CD14-positive monocyte (primary cell): ENCODE measurements at regions of chr3 and their contacts with region 1.

Region 1: DNA sequence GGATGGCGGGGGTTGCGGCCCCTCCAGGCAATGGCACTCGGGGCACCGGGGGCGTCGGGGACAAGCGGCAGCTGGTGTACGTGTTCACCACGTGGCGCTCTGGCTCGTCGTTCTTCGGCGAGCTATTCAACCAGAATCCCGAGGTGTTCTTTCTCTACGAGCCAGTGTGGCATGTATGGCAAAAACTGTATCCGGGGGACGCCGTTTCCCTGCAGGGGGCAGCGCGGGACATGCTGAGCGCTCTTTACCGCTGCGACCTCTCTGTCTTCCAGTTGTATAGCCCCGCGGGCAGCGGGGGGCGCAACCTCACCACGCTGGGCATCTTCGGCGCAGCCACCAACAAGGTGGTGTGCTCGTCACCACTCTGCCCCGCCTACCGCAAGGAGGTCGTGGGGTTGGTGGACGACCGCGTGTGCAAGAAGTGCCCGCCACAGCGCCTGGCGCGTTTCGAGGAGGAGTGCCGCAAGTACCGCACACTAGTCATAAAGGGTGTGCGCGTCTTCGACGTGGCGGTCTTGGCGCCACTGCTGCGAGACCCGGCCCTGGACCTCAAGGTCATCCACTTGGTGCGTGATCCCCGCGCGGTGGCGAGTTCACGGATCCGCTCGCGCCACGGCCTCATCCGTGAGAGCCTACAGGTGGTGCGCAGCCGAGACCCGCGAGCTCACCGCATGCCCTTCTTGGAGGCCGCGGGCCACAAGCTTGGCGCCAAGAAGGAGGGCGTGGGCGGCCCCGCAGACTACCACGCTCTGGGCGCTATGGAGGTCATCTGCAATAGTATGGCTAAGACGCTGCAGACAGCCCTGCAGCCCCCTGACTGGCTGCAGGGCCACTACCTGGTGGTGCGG is 1.9 kb downstream of the CHST2 start:
- DNase-seq: peak in 2 of 3 donors; percentile 35 to 57
- H3K4me3 ChIP-seq: peak overlapping the region; percentile 70 to 98 (median 94)
- H3K4me3 Mint-ChIP-seq: peak overlapping the region; percentile 78 to 84
- H3K27ac ChIP-seq: peak overlapping the region in 1 of 2 donors; percentile 13
- H3K27ac Mint-ChIP-seq: peak overlapping the region in 5 of 7 donors; percentile 35 to 78 (median 68)
- H3K4me1 ChIP-seq: peaks cover 44 to 65% of the 10 kb centered on the region in 2 donors
- H3K4me1 Mint-ChIP-seq: peaks cover 55% of the 10 kb centered on the region
- H3K27me3 ChIP-seq: peaks cover 0 to 5% of the 10 kb centered on the region in 2 donors
- H3K27me3 Mint-ChIP-seq: peaks cover 13 to 16% (median 14%) of the 10 kb centered on the region in 3 donors
- CTCF ChIP-seq: peak; percentile 71

Region 2: DNA sequence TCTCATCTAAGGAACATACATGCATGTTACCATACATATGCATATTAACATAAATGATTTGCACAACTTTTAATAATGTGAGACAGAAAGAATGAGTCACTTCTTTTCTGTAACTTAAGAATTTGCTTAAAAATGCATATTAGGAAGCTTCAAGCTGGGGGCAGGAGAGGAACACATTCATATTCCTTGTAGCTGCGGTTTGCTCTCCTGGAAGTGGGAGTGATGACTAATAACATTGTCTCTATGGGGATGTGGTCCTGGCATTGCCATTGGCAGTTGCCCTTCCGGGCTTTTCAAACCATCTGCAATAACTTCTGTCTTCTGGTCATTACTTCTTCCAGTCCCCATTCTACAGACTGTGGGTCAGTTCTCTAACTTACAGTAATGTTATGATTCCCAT is 13.7 kb after region 1 on chr3:
- intact Hi-C with region 1: loop called in 1 of 2 experiments (anchors 1 kb)
- DNase-seq: peak; percentile 85 to 97 (median 97)
- H3K4me3 ChIP-seq: peak overlapping the region in 1 of 3 experiments; percentile 17
- H3K4me3 Mint-ChIP-seq: peak overlapping the region in 1 of 2 donors; percentile 43
- H3K27ac ChIP-seq: peak overlapping the region in 1 of 2 donors; percentile 63
- H3K27ac Mint-ChIP-seq: peak overlapping the region; percentile 73 to 93 (median 83)
- H3K4me1 ChIP-seq: peaks cover 24 to 32% of the 10 kb centered on the region in 2 donors
- H3K4me1 Mint-ChIP-seq: peaks cover 35% of the 10 kb centered on the region
- H3K27me3 ChIP-seq: no peaks in the 10 kb centered on the region
- H3K27me3 Mint-ChIP-seq: no peaks in the 10 kb centered on the region
- CTCF ChIP-seq: no peak

Region 3: DNA sequence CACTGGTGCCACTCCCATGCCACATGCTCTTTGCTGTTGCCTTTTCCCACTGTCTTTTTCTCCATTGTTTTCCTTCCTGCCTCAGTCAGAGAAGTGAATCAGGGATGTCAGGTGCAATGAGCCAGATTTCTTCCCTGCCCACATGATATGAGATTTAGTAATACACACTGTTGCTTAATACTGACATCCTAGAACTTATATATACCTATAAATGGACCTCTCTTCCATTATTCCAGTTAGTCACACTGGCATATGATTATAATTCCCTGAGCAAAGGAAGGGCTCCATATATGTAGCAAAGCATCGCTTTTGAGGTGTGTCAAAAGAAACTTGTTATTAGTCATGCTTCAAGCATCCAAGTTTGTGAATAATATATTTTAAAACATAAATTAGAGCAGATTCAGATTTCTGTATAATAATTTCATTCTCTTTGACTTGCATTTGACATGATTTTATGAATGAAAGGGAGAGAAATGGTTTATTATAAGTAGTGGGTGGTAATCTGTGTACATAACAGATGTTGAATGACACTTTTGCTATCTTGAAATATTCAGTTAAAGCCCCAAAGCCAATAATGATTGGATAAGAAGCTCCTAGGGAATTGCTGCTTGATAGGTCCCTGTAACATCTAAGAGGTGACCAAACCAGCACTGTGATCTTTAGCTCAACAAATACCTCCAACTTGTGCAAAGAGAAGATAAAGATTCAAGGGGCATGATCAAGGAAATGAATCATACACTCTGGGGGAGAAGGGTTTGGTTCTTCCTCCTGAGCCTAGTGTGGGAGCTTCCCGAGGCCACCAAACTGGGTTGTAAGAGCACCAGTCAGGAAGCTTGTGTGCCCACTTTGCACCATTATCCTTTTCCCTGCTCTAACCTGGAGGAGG is 46.7 kb after region 1 on chr3:
- intact Hi-C with region 1: loop called (anchors 5 kb)
- DNase-seq: peak in 1 of 3 donors; percentile 55
- H3K4me3 ChIP-seq: no peak overlapping the region
- H3K4me3 Mint-ChIP-seq: no peak overlapping the region
- H3K27ac ChIP-seq: peak overlapping the region in 1 of 2 donors; percentile 11
- H3K27ac Mint-ChIP-seq: peak overlapping the region in 1 of 7 donors; percentile 22
- H3K4me1 ChIP-seq: peaks cover 88 to 92% of the 10 kb centered on the region in 2 donors
- H3K4me1 Mint-ChIP-seq: peaks cover 84% of the 10 kb centered on the region
- H3K27me3 ChIP-seq: no peaks in the 10 kb centered on the region
- H3K27me3 Mint-ChIP-seq: no peaks in the 10 kb centered on the region
- CTCF ChIP-seq: no peak

Region 4: DNA sequence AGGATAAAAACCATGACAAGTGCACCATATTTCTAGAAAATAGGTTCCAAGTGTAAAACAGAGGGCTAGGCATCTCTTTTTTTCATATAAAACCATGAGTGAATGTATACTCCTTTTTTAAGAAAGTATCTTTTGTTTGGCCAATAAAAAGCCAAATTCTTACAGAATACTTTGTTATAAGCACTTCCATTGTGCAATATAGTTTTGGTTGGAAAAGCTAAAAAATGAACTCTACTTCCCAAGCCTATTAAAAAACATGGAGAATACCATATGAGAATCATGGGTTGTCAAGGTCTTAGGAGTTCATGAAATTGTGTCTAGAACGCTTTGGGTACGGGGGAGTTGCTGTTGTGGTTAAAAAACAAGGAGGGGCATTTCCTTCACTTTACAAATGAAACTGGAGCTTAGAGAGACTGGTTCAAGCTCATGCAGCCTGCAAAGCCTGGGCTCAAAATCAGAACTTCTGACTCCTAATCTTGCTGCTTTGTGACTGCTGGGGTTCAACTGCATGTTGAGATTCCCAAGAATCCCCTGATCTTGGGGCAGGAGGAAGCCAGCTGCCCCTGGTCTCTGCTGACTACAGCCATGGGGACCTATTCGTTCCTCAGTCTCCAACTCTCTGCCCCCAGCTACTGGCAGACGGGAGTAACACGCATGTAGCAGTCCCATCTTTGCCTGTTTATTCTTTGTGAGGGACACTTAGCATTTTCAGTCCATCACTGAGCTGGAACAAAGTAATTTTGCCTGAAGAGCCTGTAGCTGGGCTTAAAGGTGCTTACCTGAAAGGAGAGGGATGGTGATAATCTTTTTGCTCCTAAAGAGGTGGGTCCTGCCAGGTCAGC is 227.2 kb after region 1 on chr3:
- intact Hi-C with region 1: no loop called
- DNase-seq: no peak
- H3K4me3 ChIP-seq: no peak overlapping the region
- H3K4me3 Mint-ChIP-seq: no peak overlapping the region
- H3K27ac ChIP-seq: no peak overlapping the region
- H3K27ac Mint-ChIP-seq: peak overlapping the region in 1 of 7 donors; percentile 30
- H3K4me1 ChIP-seq: peaks cover 13 to 18% of the 10 kb centered on the region in 2 donors
- H3K4me1 Mint-ChIP-seq: peaks cover 16% of the 10 kb centered on the region
- H3K27me3 ChIP-seq: no peaks in the 10 kb centered on the region
- H3K27me3 Mint-ChIP-seq: peaks cover 1 to 4% (median 2%) of the 10 kb centered on the region in 3 donors
- CTCF ChIP-seq: no peak

Region 5: DNA sequence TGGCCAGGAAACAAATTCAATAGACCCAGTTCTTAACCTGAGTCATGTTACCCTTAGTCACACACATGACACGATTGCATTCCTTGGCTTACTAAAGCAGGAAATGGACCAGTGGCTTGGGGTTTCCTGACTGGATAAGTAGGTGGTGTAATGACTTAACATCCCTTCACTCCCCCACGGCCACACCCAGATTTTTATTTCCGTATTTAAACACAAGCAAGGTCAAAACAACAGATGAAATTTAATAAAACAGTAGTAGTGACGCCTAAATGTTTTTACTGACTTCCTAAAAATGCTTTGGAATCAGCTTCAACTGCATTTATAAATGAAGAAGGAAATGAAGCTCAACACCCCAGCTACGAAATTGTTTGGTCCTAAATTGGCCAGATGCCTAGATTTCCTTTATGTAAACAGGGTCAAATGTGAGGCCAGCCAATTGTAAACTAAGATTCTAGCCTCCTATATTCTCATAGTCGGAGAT is 322.4 kb after region 1 on chr3:
- intact Hi-C with region 1: loop called in 1 of 2 experiments (anchors 10 kb)
- DNase-seq: peak; percentile 97 to 100 (median 99)
- H3K4me3 ChIP-seq: peak overlapping the region in 1 of 3 experiments; percentile 6
- H3K4me3 Mint-ChIP-seq: peak overlapping the region; percentile 5 to 51
- H3K27ac ChIP-seq: peak overlapping the region; percentile 85 to 90
- H3K27ac Mint-ChIP-seq: peak overlapping the region; percentile 95 to 99 (median 97)
- H3K4me1 ChIP-seq: peaks cover 26 to 29% of the 10 kb centered on the region in 2 donors
- H3K4me1 Mint-ChIP-seq: peaks cover 42% of the 10 kb centered on the region
- H3K27me3 ChIP-seq: no peaks in the 10 kb centered on the region
- H3K27me3 Mint-ChIP-seq: peaks cover 0 to 2% (median 0%) of the 10 kb centered on the region in 3 donors
- CTCF ChIP-seq: no peak

Region 6: GRCh38 chr3:143674100-143674968 is 552.9 kb after region 1 on chr3:
- intact Hi-C with region 1: loop called in 1 of 2 experiments (anchors 5 kb)
- DNase-seq: peak; percentile 59 to 64 (median 62)
- H3K4me3 ChIP-seq: no peak overlapping the region
- H3K4me3 Mint-ChIP-seq: peak overlapping the region; percentile 48 to 70
- H3K27ac ChIP-seq: no peak overlapping the region
- H3K27ac Mint-ChIP-seq: peak overlapping the region in 6 of 7 donors; percentile 53 to 84 (median 75)
- H3K4me1 ChIP-seq: peaks cover 4 to 6% of the 10 kb centered on the region in 2 donors
- H3K4me1 Mint-ChIP-seq: peaks cover 18% of the 10 kb centered on the region
- H3K27me3 ChIP-seq: no peaks in the 10 kb centered on the region
- H3K27me3 Mint-ChIP-seq: no peaks in the 10 kb centered on the region
- CTCF ChIP-seq: peak; percentile 89